ENCODE measurements at regions of chr1 and their contacts with region 1.

Region 1: DNA sequence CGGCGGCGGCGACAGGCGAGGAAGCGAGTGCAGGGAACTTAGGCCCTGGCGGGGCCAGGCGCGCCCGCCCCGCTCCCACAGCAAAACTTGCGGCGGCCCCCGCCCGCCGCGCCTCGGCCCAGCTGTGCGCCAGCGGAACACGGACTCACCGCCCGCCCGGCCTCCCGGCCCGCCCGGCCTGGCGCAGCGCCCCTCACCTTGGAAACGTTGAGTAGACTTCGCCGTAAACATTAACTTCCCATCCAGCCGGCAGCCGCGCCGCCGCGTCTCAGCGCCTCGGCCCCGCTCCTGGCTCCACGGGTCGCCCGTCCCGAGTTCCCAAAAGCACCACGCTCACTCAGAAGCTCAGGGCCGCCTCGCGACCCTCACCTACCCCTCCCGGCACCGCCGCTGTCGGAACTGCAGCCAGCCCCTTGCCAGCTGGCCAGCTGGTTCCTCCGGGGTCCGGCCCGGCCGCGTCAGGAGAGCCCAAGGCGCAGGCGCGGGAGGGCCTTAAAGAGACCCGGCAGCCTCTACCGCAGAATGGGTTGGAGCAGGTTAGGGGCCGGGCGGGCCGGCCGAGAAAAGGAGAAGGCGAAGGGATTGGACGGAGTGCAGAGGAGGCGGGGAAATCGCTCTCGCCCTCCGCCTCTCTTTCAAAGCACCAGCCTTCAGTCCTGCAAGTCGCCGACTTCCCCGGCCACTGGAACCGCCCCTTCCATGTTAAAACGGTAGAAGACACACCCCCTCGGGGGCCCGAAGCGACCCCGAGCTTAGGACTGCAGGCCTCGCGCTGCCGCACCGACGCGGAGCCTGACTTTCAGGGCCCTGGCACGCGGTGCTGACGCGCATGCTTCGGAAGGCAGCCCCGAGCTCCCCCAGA is at the start of gene EVI5:
- DNase-seq: peak; percentile 58
- H3K4me3 Mint-ChIP-seq: peak within 1 kb of the TSS; percentile 73
- H3K27ac Mint-ChIP-seq: no peak within 1 kb of the TSS
- H3K4me1 Mint-ChIP-seq: peaks cover 13% of the 10 kb centered on the region
- H3K27me3 Mint-ChIP-seq: peaks cover 32% of the 10 kb centered on the region
- total RNA-seq, gene EVI5: 13.8 to 14.0 TPM

Region 2: DNA sequence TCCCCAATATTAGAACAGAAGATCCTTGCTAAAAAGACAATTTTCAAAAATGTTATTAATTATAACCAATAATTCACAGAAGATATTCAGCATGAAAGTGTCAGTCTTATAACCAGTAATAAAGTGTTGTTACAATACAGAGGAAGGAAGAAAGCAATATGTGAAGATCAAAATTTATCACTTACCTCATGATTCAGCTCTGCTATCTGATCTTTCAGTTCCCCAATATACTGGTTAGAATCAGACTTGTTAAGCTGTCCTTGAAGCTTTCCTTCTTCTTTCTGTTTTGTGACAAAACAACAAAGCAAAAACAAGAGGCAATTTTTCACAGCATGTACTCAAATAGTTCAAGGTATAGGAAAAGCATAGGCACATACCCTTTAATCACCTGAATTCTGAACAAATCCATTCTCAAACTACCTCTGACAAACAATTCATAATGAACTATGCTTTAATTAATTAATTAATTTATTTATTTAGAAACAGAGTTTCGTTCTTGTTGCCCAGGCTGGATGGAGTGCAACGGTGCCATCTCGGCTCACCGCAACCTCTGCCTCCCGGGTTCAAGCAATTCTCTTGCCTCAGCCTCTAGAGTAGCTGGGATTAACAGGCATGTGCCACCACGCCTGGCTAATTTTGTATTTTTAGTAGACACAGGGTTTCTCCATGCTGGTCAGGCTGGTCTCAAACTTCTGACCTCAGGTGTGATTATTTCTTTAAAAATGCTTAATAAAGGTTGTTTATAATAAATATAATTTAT is 221.2 kb before region 1 on chr1:
- CTCF ChIA-PET with region 1: no interaction called
- intact Hi-C with region 1: no loop called
- DNase-seq: no peak
- H3K4me3 Mint-ChIP-seq: no peak overlapping the region
- H3K27ac Mint-ChIP-seq: no peak overlapping the region
- H3K4me1 Mint-ChIP-seq: peaks cover 24% of the 10 kb centered on the region
- H3K27me3 Mint-ChIP-seq: no peaks in the 10 kb centered on the region

Region 3: GRCh38 chr1:92749024-92749634 is 35.7 kb before region 1 on chr1:
- CTCF ChIA-PET with region 1: interaction called, 10 read pairs
- intact Hi-C with region 1: loop called (anchors 2 kb)
- DNase-seq: peak; percentile 60
- H3K4me3 Mint-ChIP-seq: no peak overlapping the region
- H3K27ac Mint-ChIP-seq: no peak overlapping the region
- H3K4me1 Mint-ChIP-seq: no peaks in the 10 kb centered on the region
- H3K27me3 Mint-ChIP-seq: no peaks in the 10 kb centered on the region

Region 4: GRCh38 chr1:92764116-92764515 is 20.8 kb before region 1 on chr1:
- CTCF ChIA-PET with region 1: no interaction called
- intact Hi-C with region 1: no loop called
- DNase-seq: no peak
- H3K4me3 Mint-ChIP-seq: no peak overlapping the region
- H3K27ac Mint-ChIP-seq: no peak overlapping the region
- H3K4me1 Mint-ChIP-seq: no peaks in the 10 kb centered on the region
- H3K27me3 Mint-ChIP-seq: no peaks in the 10 kb centered on the region

Region 5: DNA sequence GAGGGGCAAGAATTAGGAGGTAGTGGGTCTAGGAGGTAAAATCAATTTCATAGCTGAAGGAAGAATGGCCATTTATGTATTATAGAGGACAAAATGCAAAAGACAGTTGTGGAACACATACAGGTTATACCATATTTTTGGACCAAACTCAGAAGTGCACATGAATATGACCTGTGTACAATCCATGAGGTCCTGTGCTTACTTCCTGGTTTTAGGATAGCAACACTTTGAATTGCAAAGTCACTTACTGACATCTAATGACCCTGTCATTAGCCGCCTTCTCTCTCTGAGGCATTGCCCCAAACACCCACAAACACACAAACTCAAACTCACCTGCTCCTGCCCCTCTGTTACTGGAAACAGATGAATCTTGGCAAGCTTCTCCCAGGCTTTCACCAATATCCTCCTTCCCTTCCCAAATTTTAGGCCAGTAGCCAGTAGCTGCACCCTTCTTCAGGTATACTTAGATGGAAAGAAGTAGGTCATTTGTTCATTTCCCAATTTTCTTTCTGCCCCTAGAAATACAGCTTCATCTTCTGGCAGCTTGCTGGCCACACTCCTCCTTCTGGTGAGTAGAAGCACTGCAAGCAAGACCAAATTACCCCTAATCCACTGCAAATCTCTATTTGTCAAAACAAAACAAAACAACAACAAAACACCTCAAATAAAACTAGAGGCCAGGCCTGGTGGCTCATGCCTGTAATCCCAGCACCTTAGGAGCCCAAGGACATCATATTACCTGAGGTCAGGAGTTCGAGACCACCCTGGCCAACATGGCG is 33.3 kb after region 1 on chr1:
- CTCF ChIA-PET with region 1: interaction called, 3 read pairs
- intact Hi-C with region 1: loop called (anchors 5 kb)
- DNase-seq: peak; percentile 16
- H3K4me3 Mint-ChIP-seq: no peak overlapping the region
- H3K27ac Mint-ChIP-seq: no peak overlapping the region
- H3K4me1 Mint-ChIP-seq: no peaks in the 10 kb centered on the region
- H3K27me3 Mint-ChIP-seq: no peaks in the 10 kb centered on the region

Region 6: GRCh38 chr1:93042187-93043056 is 257.6 kb after region 1 on chr1:
- CTCF ChIA-PET with region 1: no interaction called
- intact Hi-C with region 1: loop called (anchors 1 kb)
- DNase-seq: peak; percentile 38
- H3K4me3 Mint-ChIP-seq: peak overlapping the region; percentile 64
- H3K27ac Mint-ChIP-seq: peak overlapping the region; percentile 85
- H3K4me1 Mint-ChIP-seq: peaks cover 26% of the 10 kb centered on the region
- H3K27me3 Mint-ChIP-seq: no peaks in the 10 kb centered on the region

Measured in activated naive CD4-positive, alpha-beta T cell treated with anti-CD3 and anti-CD28 coated beads for 36 hours (primary cell).